A673 (cell line): ENCODE measurements at regions of chr17 and their contacts with region 1.

Region 1: GRCh38 chr17:27293898-27294688 is at the start of gene WSB1:
- DNase-seq: peak; percentile 95
- H3K4me3 ChIP-seq: peak within 1 kb of the TSS; percentile 79
- H3K27ac ChIP-seq: peak within 1 kb of the TSS; percentile 96
- H3K4me1 ChIP-seq: peaks cover 20% of the 10 kb centered on the region
- H3K27me3 ChIP-seq: no peaks in the 10 kb centered on the region
- CTCF ChIP-seq: 0 out of 2 replicates have a peak, but pooled peaks have one; percentile 18
- total RNA-seq, gene WSB1: 114 and 120 TPM in 2 replicates

Region 2: GRCh38 chr17:27158382-27158781 is 135.7 kb before region 1 on chr17:
- CTCF ChIA-PET with region 1: no interaction called
- POLR2A ChIA-PET with region 1: no interaction called
- intact Hi-C with region 1: no loop called
- DNase-seq: no peak
- H3K4me3 ChIP-seq: no peak overlapping the region
- H3K27ac ChIP-seq: no peak overlapping the region
- H3K4me1 ChIP-seq: no peaks in the 10 kb centered on the region
- H3K27me3 ChIP-seq: no peaks in the 10 kb centered on the region
- CTCF ChIP-seq: no peak

Region 3: GRCh38 chr17:27245230-27245696 is 48.8 kb before region 1 on chr17:
- CTCF ChIA-PET with region 1: no interaction called
- POLR2A ChIA-PET with region 1: no interaction called
- intact Hi-C with region 1: loop called (anchors 2 kb)
- DNase-seq: peak; percentile 91
- H3K4me3 ChIP-seq: peak overlapping the region; percentile 9
- H3K27ac ChIP-seq: peak overlapping the region; percentile 70
- H3K4me1 ChIP-seq: peaks cover 19% of the 10 kb centered on the region
- H3K27me3 ChIP-seq: no peaks in the 10 kb centered on the region
- CTCF ChIP-seq: peak; percentile 82

Region 4: GRCh38 chr17:27315322-27315721 is 21.2 kb after region 1 on chr17:
- CTCF ChIA-PET with region 1: no interaction called
- POLR2A ChIA-PET with region 1: interaction called, 8 read pairs
- intact Hi-C with region 1: loop called (anchors 2 kb)
- DNase-seq: peak; percentile 75
- H3K4me3 ChIP-seq: no peak overlapping the region
- H3K27ac ChIP-seq: peak overlapping the region; percentile 67
- H3K4me1 ChIP-seq: peaks cover 12% of the 10 kb centered on the region
- H3K27me3 ChIP-seq: no peaks in the 10 kb centered on the region
- CTCF ChIP-seq: no peak

Region 5: GRCh38 chr17:27332485-27333409 is 38.7 kb after region 1 on chr17:
- CTCF ChIA-PET with region 1: interaction called, 3 read pairs
- POLR2A ChIA-PET with region 1: interaction called, 3 read pairs
- intact Hi-C with region 1: loop called (anchors 2 kb)
- DNase-seq: peak; percentile 95
- H3K4me3 ChIP-seq: peak overlapping the region; percentile 46
- H3K27ac ChIP-seq: peak overlapping the region; percentile 68
- H3K4me1 ChIP-seq: peaks cover 15% of the 10 kb centered on the region
- H3K27me3 ChIP-seq: no peaks in the 10 kb centered on the region
- CTCF ChIP-seq: peak; percentile 84

Region 6: DNA sequence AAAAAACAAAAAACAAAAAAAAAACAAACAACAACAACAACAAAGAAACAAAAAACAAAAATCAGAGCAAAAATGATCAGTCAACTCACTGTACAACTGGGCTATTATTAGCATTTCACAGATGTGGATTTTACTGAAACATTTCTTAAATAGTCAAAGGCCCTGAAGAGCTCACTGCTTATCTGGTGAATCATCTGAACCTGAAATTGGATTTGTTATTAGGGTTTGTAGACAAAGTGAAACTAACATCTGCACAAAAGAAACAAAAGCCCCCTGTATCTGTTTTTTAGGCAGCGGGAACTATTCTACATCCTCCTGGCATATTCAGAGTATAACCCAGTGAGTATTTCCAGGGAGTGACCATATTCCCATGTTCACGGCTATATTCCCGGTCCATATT is 129.6 kb after region 1 on chr17:
- CTCF ChIA-PET with region 1: no interaction called
- POLR2A ChIA-PET with region 1: no interaction called
- intact Hi-C with region 1: no loop called
- DNase-seq: no peak
- H3K4me3 ChIP-seq: no peak overlapping the region
- H3K27ac ChIP-seq: no peak overlapping the region
- H3K4me1 ChIP-seq: no peaks in the 10 kb centered on the region
- H3K27me3 ChIP-seq: no peaks in the 10 kb centered on the region
- CTCF ChIP-seq: no peak